ENCODE measurements at regions of chr7 and their contacts with region 1.

Region 1: DNA sequence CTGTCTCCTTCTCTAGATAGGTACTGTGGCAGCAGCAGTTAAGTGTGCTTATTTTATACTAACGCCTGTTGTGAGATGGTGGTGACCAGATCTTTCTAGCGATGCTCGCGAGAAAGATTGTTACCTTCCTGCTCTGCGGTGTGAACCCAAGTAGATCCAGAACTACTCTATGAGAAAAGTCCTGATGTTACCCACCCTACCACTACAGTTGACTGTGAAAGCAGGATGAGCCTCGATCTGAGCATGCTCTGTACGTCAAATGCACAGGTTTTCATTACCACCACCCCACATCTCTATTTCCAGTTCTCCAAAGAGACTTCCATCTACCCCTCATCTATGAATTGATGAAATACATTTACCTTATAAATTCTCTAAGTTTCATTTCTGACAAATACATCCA is 64.6 kb upstream of the KCTD7 start:
- DNase-seq: no peak
- H3K4me3 ChIP-seq: no peak overlapping the region
- H3K27ac ChIP-seq: no peak overlapping the region
- H3K4me1 ChIP-seq: peaks cover 0 to 16% (median 1%) of the 10 kb centered on the region in 6 donors
- H3K27me3 ChIP-seq: no peaks in the 10 kb centered on the region
- CTCF ChIP-seq: no peak
- POLR2A ChIP-seq: no peak

Region 2: DNA sequence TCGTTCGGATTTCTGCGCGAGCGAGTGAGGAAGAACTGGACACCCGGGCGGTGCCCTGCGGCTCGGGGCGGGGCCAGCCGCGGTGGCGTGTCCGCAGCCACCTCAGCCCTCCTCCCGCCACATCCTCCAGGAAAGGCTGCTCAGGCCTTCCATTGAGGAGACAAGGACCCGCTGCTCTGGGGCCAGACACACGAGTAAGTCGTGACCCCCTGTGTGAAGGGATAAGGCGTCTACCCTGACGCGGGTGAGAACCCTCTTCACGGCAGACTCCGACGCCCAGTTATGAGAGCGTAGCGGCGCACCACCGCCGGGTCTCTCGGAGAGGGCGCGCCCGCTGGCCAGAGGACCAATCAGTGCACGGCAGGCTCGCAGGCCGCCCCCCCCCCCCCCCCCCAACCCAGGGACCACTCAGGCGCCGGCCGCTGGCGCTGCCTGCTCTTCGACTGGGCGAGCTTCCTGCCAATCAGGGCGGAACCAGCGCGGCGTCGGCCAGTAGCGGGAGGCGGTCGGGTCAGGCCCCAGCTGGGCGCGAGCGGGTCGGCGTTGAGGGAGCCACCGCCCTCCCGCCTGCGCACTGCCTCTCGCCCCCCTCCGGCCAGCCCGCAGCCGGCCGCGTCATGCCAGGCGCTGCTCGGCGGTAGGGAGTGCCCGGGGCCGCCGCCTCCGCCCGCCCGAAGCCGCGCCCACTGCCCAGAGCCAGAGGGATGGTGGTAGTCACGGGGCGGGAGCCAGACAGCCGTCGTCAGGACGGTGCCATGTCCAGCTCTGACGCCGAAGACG is 64.5 kb after region 1 on chr7 and contains the start of gene KCTD7:
- intact Hi-C with region 1: loop called (anchors 10 kb)
- DNase-seq: peak; percentile 99
- H3K4me3 ChIP-seq: peak within 1 kb of the TSS; percentile 62 to 90 (median 73)
- H3K27ac ChIP-seq: peak within 1 kb of the TSS; percentile 92 to 99 (median 96)
- H3K4me1 ChIP-seq: peaks cover 32 to 54% (median 50%) of the 10 kb centered on the region in 6 donors
- H3K27me3 ChIP-seq: no peaks in the 10 kb centered on the region
- CTCF ChIP-seq: peak in 2 of 11 experiments; percentile 19 to 37
- POLR2A ChIP-seq: peak in 2 of 3 donors; percentile 93 to 95
- total RNA-seq, gene KCTD7: 13.3 to 25.0 (median 16.7) TPM

Region 3: GRCh38 chr7:66654123-66654732 is 90.2 kb after region 1 on chr7:
- intact Hi-C with region 1: no loop called
- DNase-seq: peak; percentile 99
- H3K4me3 ChIP-seq: peak overlapping the region; percentile 82 to 97 (median 87)
- H3K27ac ChIP-seq: peak overlapping the region; percentile 96 to 99 (median 98)
- H3K4me1 ChIP-seq: peaks cover 0 to 33% (median 19%) of the 10 kb centered on the region in 6 donors
- H3K27me3 ChIP-seq: no peaks in the 10 kb centered on the region
- CTCF ChIP-seq: peak in 7 of 11 experiments; percentile 17 to 54 (median 31)
- POLR2A ChIP-seq: peak; percentile 9 to 92 (median 73)

Measured in spleen (tissue), 13 donors.